CD4-positive, alpha-beta memory T cell (primary cell): ENCODE measurements at regions of chr4 and their contacts with region 1.

Region 1: DNA sequence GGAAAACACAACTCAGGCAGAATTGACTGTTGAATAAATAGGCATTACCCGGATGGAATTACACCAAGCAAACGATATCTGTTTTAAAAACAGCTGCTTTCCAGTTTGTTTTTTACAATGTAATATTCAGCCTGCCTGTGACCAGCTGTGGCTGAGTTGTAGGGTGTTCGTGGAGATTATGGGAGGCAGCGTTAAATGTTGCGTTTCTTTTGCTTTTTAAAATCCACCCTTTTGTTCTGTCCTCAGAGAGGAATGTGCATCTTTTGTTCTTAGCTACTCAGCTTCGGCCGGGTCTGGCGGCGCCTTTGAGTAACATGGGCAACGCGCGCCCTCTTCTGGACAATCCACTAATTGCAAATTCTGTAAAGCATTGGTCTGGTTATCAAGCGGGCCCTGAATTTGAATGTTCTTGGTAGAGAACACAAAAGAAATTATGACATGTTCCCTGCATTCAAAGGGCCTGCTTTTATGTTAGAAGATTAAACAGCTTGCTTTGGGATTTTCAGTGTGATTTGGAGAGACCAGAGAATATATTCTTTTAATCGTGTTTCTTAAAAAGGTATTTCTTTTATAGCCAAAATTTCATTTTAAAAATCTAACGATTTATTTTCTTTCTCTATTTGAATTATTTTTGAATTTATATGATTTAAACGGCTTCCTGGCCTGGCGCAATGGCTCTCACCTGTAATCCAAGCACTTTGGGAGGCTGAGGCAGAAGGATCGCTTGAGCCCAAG is 76.3 kb upstream of the TRIM2 start:
- DNase-seq: peak; percentile 77 to 83 (median 82)
- H3K4me3 ChIP-seq: no peak overlapping the region
- H3K4me3 Mint-ChIP-seq: no peak overlapping the region
- H3K27ac ChIP-seq: no peak overlapping the region
- H3K27ac Mint-ChIP-seq: peak overlapping the region in 6 of 7 donors; percentile 8 to 75 (median 58)
- H3K4me1 ChIP-seq: peaks cover 6% of the 10 kb centered on the region
- H3K4me1 Mint-ChIP-seq: peaks cover 0 to 6% (median 2%) of the 10 kb centered on the region in 4 donors
- H3K27me3 ChIP-seq: no peaks in the 10 kb centered on the region
- H3K27me3 Mint-ChIP-seq: no peaks in the 10 kb centered on the region

Region 2: GRCh38 chr4:152779513-152780266 is 348.2 kb before region 1 on chr4 and contains the starts of genes ARFIP1 and TIGD4:
- CTCF ChIA-PET with region 1: interaction called, 18 read pairs
- POLR2A ChIA-PET with region 1: interaction called, 3 read pairs
- intact Hi-C with region 1: no loop called
- DNase-seq: peak; percentile 93 to 95 (median 94)
- H3K4me3 ChIP-seq: peak within 1 kb of the TSS; percentile 94 to 96
- H3K4me3 Mint-ChIP-seq: peak within 1 kb of the TSS; percentile 92 to 100 (median 99)
- H3K27ac ChIP-seq: peak within 1 kb of the TSS; percentile 78
- H3K27ac Mint-ChIP-seq: peak within 1 kb of the TSS; percentile 93 to 99 (median 98)
- H3K4me1 ChIP-seq: peaks cover 27% of the 10 kb centered on the region
- H3K4me1 Mint-ChIP-seq: peaks cover 28 to 49% (median 40%) of the 10 kb centered on the region in 4 donors
- H3K27me3 ChIP-seq: no peaks in the 10 kb centered on the region
- H3K27me3 Mint-ChIP-seq: peaks cover 0 to 2% of the 10 kb centered on the region in 2 donors
- total RNA-seq, gene ARFIP1: 12.5 to 16.5 TPM
- total RNA-seq, gene TIGD4: 0.12 to 0.17 TPM

Region 3: DNA sequence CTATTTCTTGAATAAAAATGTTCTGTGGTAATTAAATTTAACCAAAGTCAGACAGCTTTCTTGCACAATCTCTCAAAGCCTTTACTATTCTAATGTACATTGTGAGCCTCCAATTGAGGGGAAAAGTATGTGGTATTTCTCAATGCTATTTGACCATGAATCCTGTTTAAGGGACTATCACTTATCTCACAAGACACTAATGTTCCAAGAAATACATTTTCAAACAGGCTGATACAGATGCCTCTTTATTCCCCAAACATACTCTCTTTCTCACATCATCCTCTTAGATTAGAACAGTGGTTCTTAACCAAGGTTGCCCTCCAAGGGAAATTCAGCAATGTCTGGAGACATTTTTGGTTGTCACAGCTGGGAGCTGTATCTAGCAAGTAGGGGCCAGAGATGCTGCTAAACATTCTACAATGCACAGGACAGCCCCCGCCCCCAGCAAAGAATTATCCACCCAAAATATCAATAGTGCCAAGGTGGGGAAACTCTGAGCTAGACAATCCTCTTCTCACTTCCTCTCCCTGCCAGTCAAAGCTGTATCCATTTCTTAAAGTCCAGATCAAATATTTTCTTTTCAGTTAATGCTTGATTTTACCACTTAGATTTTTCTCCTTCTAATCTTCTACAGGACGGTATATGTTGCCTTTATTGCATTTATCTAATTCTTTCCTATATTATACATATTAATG is 52.8 kb before region 1 on chr4:
- CTCF ChIA-PET with region 1: interaction called, 555 read pairs
- POLR2A ChIA-PET with region 1: no interaction called
- intact Hi-C with region 1: no loop called
- DNase-seq: no peak
- H3K4me3 ChIP-seq: no peak overlapping the region
- H3K4me3 Mint-ChIP-seq: no peak overlapping the region
- H3K27ac ChIP-seq: no peak overlapping the region
- H3K27ac Mint-ChIP-seq: peak overlapping the region in 1 of 7 donors; percentile 30
- H3K4me1 ChIP-seq: peaks cover 23% of the 10 kb centered on the region
- H3K4me1 Mint-ChIP-seq: peaks cover 9 to 32% (median 21%) of the 10 kb centered on the region in 4 donors
- H3K27me3 ChIP-seq: no peaks in the 10 kb centered on the region
- H3K27me3 Mint-ChIP-seq: peaks cover 0 to 3% of the 10 kb centered on the region in 2 donors

Region 4: GRCh38 chr4:153095448-153096204 is 32.3 kb before region 1 on chr4:
- CTCF ChIA-PET with region 1: interaction called, 61 read pairs
- POLR2A ChIA-PET with region 1: no interaction called
- intact Hi-C with region 1: no loop called
- DNase-seq: no peak
- H3K4me3 ChIP-seq: no peak overlapping the region
- H3K4me3 Mint-ChIP-seq: no peak overlapping the region
- H3K27ac ChIP-seq: no peak overlapping the region
- H3K27ac Mint-ChIP-seq: peak overlapping the region in 3 of 7 donors; percentile 19 to 77 (median 50)
- H3K4me1 ChIP-seq: peaks cover 4% of the 10 kb centered on the region
- H3K4me1 Mint-ChIP-seq: peaks cover 2 to 9% (median 6%) of the 10 kb centered on the region in 4 donors
- H3K27me3 ChIP-seq: no peaks in the 10 kb centered on the region
- H3K27me3 Mint-ChIP-seq: no peaks in the 10 kb centered on the region

Region 5: DNA sequence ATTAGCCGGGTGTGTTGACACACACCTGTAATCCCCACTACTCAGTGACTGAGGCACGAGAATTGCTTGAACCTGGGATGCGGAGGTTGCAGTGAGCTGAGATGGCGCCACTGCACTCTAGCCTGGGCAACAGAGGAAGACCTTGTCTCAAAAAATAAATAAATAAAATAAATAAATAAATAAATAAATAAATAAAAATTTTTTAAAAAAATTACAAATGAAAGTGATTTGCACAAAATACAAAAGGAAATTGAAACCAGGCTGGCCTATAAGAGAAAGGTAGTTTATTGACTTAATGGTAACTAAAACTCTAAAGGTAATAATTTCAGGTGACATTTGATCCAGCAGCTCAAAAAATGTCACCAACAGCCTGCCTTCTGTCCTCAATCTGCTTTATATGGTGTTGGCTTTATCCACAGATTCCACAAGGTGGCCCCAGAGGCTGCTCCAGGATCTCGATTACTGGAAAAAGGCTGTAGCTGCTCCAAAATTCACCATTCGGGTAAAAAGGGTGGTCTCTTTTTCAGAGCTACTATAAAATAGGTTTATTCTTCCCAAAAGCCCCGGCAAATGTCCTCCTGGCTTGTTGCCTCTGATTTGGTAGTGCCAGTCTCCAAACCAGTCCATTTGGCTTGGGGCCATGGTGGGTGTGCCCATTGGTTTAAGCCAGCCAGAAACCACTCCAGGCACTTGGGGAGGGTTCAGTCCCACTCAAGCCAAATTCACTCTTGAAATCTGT is 14.9 kb after region 1 on chr4:
- CTCF ChIA-PET with region 1: interaction called, 16 read pairs
- POLR2A ChIA-PET with region 1: no interaction called
- intact Hi-C with region 1: no loop called
- DNase-seq: peak; percentile 63 to 68 (median 64)
- H3K4me3 ChIP-seq: no peak overlapping the region
- H3K4me3 Mint-ChIP-seq: no peak overlapping the region
- H3K27ac ChIP-seq: no peak overlapping the region
- H3K27ac Mint-ChIP-seq: no peak overlapping the region
- H3K4me1 ChIP-seq: peaks cover 4% of the 10 kb centered on the region
- H3K4me1 Mint-ChIP-seq: peaks cover 0 to 12% (median 5%) of the 10 kb centered on the region in 4 donors
- H3K27me3 ChIP-seq: no peaks in the 10 kb centered on the region
- H3K27me3 Mint-ChIP-seq: no peaks in the 10 kb centered on the region

Region 6: GRCh38 chr4:153297116-153297515 is 169.2 kb after region 1 on chr4:
- CTCF ChIA-PET with region 1: no interaction called
- POLR2A ChIA-PET with region 1: no interaction called
- intact Hi-C with region 1: no loop called
- DNase-seq: no peak
- H3K4me3 ChIP-seq: no peak overlapping the region
- H3K4me3 Mint-ChIP-seq: no peak overlapping the region
- H3K27ac ChIP-seq: no peak overlapping the region
- H3K27ac Mint-ChIP-seq: no peak overlapping the region
- H3K4me1 ChIP-seq: no peaks in the 10 kb centered on the region
- H3K4me1 Mint-ChIP-seq: peaks cover 0 to 1% (median 0%) of the 10 kb centered on the region in 4 donors
- H3K27me3 ChIP-seq: no peaks in the 10 kb centered on the region
- H3K27me3 Mint-ChIP-seq: peaks cover 0 to 2% of the 10 kb centered on the region in 2 donors

Region 7: DNA sequence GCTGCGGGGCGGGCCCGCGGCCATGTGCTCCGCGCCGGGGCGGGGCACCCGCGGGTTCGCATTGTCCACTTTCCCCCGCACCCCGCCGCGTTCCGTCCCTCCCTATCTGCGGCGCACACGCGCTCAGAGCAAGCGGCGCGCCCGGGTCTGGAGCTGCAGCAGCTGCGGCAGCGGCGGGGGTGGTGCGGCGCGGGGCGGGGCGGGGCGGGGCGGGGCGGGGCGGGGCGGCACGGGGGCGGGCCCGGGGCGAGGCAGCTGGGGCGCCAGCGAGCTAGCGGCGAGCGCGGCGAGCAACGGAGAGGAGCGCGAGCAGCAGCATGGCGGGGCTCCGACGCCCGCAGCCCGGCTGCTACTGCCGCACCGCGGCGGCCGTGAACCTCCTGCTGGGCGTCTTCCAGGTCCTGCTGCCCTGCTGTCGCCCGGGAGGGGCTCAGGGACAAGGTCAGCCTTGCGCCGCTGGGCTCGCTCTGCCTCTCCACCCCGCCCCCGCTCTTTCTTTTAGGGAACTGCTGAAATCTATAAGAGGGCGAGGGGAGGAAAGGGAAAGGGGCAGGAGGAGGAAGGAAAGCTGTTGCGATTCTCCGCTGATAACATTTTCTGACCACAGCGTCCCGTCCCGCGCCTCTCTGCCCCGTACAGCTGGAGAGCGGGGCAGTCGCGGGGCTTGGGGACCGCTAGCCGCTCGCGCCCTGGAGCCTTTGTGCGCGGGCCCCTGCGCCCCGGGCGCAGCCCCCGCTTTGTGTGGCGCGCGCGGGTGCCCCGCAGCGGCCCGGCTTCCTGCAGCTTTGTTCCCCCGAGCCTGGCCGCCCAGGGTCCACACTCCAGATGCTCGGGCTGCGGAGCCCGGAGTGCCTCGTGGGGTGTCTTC is 338.4 kb after region 1 on chr4 and contains the start of gene TMEM131L:
- CTCF ChIA-PET with region 1: no interaction called
- POLR2A ChIA-PET with region 1: no interaction called
- intact Hi-C with region 1: no loop called
- DNase-seq: peak; percentile 66 to 81 (median 73)
- H3K4me3 ChIP-seq: peak within 1 kb of the TSS; percentile 79 to 86
- H3K4me3 Mint-ChIP-seq: peak within 1 kb of the TSS; percentile 89 to 99 (median 98)
- H3K27ac ChIP-seq: peak within 1 kb of the TSS; percentile 76
- H3K27ac Mint-ChIP-seq: peak within 1 kb of the TSS; percentile 95 to 100 (median 98)
- H3K4me1 ChIP-seq: peaks cover 37% of the 10 kb centered on the region
- H3K4me1 Mint-ChIP-seq: peaks cover 30 to 60% (median 36%) of the 10 kb centered on the region in 4 donors
- H3K27me3 ChIP-seq: no peaks in the 10 kb centered on the region
- H3K27me3 Mint-ChIP-seq: no peaks in the 10 kb centered on the region
- total RNA-seq, gene TMEM131L: 62.5 to 65.6 TPM

Region 8: GRCh38 chr4:153603258-153603657 is 475.3 kb after region 1 on chr4:
- CTCF ChIA-PET with region 1: no interaction called
- POLR2A ChIA-PET with region 1: no interaction called
- intact Hi-C with region 1: no loop called
- DNase-seq: no peak
- H3K4me3 ChIP-seq: no peak overlapping the region
- H3K4me3 Mint-ChIP-seq: no peak overlapping the region
- H3K27ac ChIP-seq: no peak overlapping the region
- H3K27ac Mint-ChIP-seq: peak overlapping the region in 1 of 7 donors; percentile 1
- H3K4me1 ChIP-seq: no peaks in the 10 kb centered on the region
- H3K4me1 Mint-ChIP-seq: peaks cover 2 to 18% (median 5%) of the 10 kb centered on the region in 4 donors
- H3K27me3 ChIP-seq: no peaks in the 10 kb centered on the region
- H3K27me3 Mint-ChIP-seq: no peaks in the 10 kb centered on the region

Region 9: DNA sequence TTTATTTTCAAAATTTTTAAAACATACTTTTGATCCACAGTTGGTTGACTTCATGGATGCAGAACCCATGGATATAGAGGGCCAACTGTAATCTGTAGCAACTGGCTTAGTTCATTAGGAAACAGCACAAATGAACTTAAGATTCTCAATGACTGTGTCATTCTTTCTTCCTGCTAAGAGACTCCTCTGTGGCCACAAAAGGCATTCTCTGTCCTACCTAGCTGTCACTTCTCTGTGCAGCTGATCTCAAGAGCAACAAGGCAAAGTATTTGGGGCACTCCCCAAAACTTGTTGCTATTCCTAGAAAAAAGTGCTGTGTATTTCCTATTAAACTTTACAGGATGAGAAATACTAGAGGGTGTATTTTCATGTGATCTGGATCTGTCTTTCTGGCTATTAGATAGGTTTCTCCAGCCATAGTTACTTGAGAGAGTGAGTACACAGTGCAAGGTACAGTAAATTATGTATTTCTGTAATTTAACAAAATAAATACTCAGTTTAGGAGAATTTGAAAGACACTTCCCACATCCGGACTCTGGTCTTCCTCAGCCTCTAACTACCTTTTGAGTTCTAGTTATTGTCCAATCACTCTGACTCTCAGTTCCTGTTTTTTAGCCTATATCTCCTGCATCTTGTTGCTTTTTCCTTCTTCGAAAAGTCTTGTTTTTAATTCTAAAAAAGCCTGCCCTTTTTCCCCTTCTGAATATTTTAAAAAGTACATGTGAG is 578.0 kb after region 1 on chr4:
- CTCF ChIA-PET with region 1: no interaction called
- POLR2A ChIA-PET with region 1: no interaction called
- intact Hi-C with region 1: no loop called
- DNase-seq: no peak
- H3K4me3 ChIP-seq: no peak overlapping the region
- H3K4me3 Mint-ChIP-seq: peak overlapping the region in 7 of 8 donors; percentile 15 to 67 (median 56)
- H3K27ac ChIP-seq: no peak overlapping the region
- H3K27ac Mint-ChIP-seq: peak overlapping the region in 6 of 7 donors; percentile 49 to 86 (median 71)
- H3K4me1 ChIP-seq: no peaks in the 10 kb centered on the region
- H3K4me1 Mint-ChIP-seq: peaks cover 3 to 12% (median 11%) of the 10 kb centered on the region in 4 donors
- H3K27me3 ChIP-seq: no peaks in the 10 kb centered on the region
- H3K27me3 Mint-ChIP-seq: peaks cover 0 to 5% of the 10 kb centered on the region in 2 donors